ENCODE measurements at regions of chr2 and their contacts with region 1.

Region 1: GRCh38 chr2:9474361-9474967 is at the start of gene IAH1:
- DNase-seq: peak; percentile 22 to 49
- ATAC-seq: peak; percentile 79 to 81
- H3K4me3 ChIP-seq: peak within 1 kb of the TSS; percentile 73 to 88 (median 79)
- H3K27ac ChIP-seq: peak within 1 kb of the TSS; percentile 80 to 92 (median 91)
- H3K4me1 ChIP-seq: peaks cover 21 to 46% of the 10 kb centered on the region in 2 donors
- H3K27me3 ChIP-seq: no peaks in the 10 kb centered on the region
- CTCF ChIP-seq: no peak
- POLR2A ChIP-seq: peak; percentile 52 to 59
- total RNA-seq, gene IAH1: 15.8 to 45.9 (median 38.6) TPM

Region 2: GRCh38 chr2:9423100-9423921 is 51.2 kb before region 1 on chr2 and contains the starts of genes CPSF3 and ITGB1BP1:
- in situ Hi-C with region 1: no loop called
- intact Hi-C with region 1: loop called (anchors 2 kb)
- DNase-seq: peak; percentile 94 to 96
- ATAC-seq: peak; percentile 93 to 96
- H3K4me3 ChIP-seq: peak within 1 kb of the TSS; percentile 84 to 99 (median 98)
- H3K27ac ChIP-seq: peak within 1 kb of the TSS; percentile 82 to 96 (median 91)
- H3K4me1 ChIP-seq: peaks cover 27 to 29% of the 10 kb centered on the region in 2 donors
- H3K27me3 ChIP-seq: no peaks in the 10 kb centered on the region
- CTCF ChIP-seq: peak in 3 of 5 experiments; percentile 11 to 35 (median 27)
- POLR2A ChIP-seq: peak; percentile 55 to 60
- total RNA-seq, gene CPSF3: 20.9 to 51.8 (median 24.1) TPM
- total RNA-seq, gene ITGB1BP1: 21.4 to 28.0 (median 26.4) TPM

Region 3: GRCh38 chr2:9693211-9693520 is 218.7 kb after region 1 on chr2:
- in situ Hi-C with region 1: no loop called
- intact Hi-C with region 1: loop called (anchors 5 kb)
- DNase-seq: peak; percentile 87 to 96
- ATAC-seq: peak; percentile 97 to 98
- H3K4me3 ChIP-seq: peak overlapping the region; percentile 26 to 46 (median 38)
- H3K27ac ChIP-seq: peak overlapping the region; percentile 90 to 97 (median 96)
- H3K4me1 ChIP-seq: peaks cover 19 to 20% of the 10 kb centered on the region in 2 donors
- H3K27me3 ChIP-seq: no peaks in the 10 kb centered on the region
- CTCF ChIP-seq: no peak
- POLR2A ChIP-seq: no peak

Region 4: GRCh38 chr2:9768388-9768787 is 293.9 kb after region 1 on chr2:
- in situ Hi-C with region 1: no loop called
- intact Hi-C with region 1: loop called (anchors 10 kb)
- DNase-seq: peak in 1 of 2 donors; percentile 66
- ATAC-seq: peak; percentile 55 to 74
- H3K4me3 ChIP-seq: no peak overlapping the region
- H3K27ac ChIP-seq: peak overlapping the region in 3 of 4 donors; percentile 32 to 53 (median 41)
- H3K4me1 ChIP-seq: peaks cover 25 to 34% of the 10 kb centered on the region in 2 donors
- H3K27me3 ChIP-seq: no peaks in the 10 kb centered on the region
- CTCF ChIP-seq: peak; percentile 21 to 47 (median 44)
- POLR2A ChIP-seq: no peak

Measured in gastrocnemius medialis (tissue), 4 donors.